Keratinocyte (primary cell): ENCODE measurements at regions of chr2 and their contacts with region 1.

Region 1: GRCh38 chr2:197356136-197356535 is 45.6 kb upstream of the ANKRD44 start:
- DNase-seq: no peak
- H3K4me3 ChIP-seq: no peak overlapping the region
- H3K27ac ChIP-seq: no peak overlapping the region
- H3K4me1 ChIP-seq: no peaks in the 10 kb centered on the region
- H3K27me3 ChIP-seq: no peaks in the 10 kb centered on the region
- CTCF ChIP-seq: peak in 2 of 3 experiments; percentile 12 to 21

Region 2: GRCh38 chr2:197191177-197191939 is 164.8 kb before region 1 on chr2:
- dilution Hi-C with region 1: loop called (anchors 25 kb)
- DNase-seq: no peak
- H3K4me3 ChIP-seq: no peak overlapping the region
- H3K27ac ChIP-seq: no peak overlapping the region
- H3K4me1 ChIP-seq: no peaks in the 10 kb centered on the region
- H3K27me3 ChIP-seq: no peaks in the 10 kb centered on the region
- CTCF ChIP-seq: peak in 2 of 3 experiments; percentile 34 to 51